Right cardiac atrium (tissue), 5 donors: ENCODE measurements at regions of chr6 and their contacts with region 1.

Region 1: DNA sequence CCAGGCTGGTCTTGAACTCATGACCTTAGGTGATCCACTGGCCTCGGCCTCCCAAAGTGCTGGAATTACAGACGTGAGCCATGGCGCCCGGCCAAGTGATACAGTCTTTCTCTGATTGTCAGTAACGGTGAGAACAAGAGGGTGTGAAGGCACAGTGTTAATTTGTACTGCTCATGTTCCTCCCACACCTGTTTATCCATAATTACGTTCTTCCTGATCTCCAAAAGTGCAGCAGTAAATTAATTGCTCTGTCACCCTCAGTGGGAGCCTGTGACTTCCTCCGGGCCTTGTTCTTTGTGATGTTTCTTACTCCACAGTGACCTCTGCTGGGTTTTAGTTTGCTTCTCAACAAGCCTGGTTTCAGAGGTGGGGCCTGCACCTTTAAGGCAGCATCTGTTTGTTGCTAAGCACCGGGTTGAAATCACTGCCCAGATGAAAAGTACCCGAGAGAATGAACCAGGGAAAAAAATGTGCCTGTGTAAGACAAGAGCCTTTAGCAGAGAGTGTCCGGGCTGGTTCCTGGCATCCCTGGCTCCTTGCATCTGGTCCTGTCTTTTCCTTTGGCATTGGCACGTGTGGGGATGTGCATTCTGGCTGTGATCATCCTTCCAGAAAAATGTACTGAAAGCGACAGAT is 89.1 kb upstream of the CLDN20 start:
- DNase-seq: peak; percentile 41 to 74 (median 58)
- ATAC-seq: peak; percentile 79 to 84
- H3K4me3 ChIP-seq: no peak overlapping the region
- H3K27ac ChIP-seq: no peak overlapping the region
- H3K4me1 ChIP-seq: peaks cover 5% of the 10 kb centered on the region
- H3K27me3 ChIP-seq: no peaks in the 10 kb centered on the region

Region 2: DNA sequence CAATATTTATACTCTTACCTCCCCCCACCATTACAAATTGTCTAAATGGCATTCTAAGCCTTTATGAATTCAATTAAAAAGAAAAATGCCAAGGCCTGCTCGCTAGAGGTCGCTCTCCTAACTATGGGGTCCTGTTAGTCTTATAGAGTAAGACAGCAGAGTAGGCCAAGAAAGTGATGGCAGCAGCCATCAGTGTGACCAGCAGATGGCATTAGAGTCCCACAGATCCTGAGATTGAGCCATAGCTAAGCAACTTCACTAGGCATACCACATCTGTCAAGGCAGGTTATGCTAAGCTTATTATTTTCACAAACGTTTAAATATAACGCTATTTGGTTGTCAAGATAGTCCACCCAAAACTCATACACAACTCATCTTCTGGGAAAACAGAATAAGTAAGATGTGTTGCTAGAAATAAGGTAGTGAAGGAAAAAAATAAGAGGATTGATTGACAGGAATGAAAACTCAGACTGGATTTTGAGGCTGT is 499.0 kb before region 1 on chr6:
- intact Hi-C with region 1: loop called in 3 of 4 experiments (anchors 5 to 10 kb)
- DNase-seq: peak; percentile 83 to 93 (median 87)
- ATAC-seq: peak; percentile 97 to 98
- H3K4me3 ChIP-seq: no peak overlapping the region
- H3K27ac ChIP-seq: no peak overlapping the region
- H3K4me1 ChIP-seq: no peaks in the 10 kb centered on the region
- H3K27me3 ChIP-seq: no peaks in the 10 kb centered on the region

Region 3: GRCh38 chr6:154868143-154868594 is 306.5 kb before region 1 on chr6:
- intact Hi-C with region 1: loop called in 3 of 4 experiments (anchors 5 to 10 kb)
- DNase-seq: no peak
- ATAC-seq: no peak
- H3K4me3 ChIP-seq: no peak overlapping the region
- H3K27ac ChIP-seq: no peak overlapping the region
- H3K4me1 ChIP-seq: no peaks in the 10 kb centered on the region
- H3K27me3 ChIP-seq: no peaks in the 10 kb centered on the region

Region 4: DNA sequence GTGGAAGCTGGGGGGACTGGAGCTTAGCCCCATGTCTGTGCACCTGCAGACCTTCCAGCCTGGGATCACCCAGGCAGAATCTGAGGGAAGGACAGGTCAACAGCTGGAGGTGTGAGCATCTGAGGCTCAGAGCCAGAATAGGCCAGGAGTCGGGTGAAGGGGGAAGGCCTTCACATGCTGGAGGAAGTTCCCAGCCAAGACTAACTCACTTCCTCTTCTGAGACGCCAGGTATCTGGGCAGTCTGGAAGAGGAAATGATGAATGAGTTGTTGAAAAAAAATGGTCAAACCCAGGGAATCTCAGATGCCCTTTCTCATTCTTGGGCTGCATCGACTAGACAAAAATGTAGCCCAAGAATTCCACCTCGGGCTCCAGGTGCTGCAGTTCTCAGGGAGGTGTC is 253.2 kb before region 1 on chr6:
- intact Hi-C with region 1: loop called in 2 of 4 experiments (anchors 5 kb)
- DNase-seq: no peak
- ATAC-seq: no peak
- H3K4me3 ChIP-seq: no peak overlapping the region
- H3K27ac ChIP-seq: no peak overlapping the region
- H3K4me1 ChIP-seq: peaks cover 5% of the 10 kb centered on the region
- H3K27me3 ChIP-seq: no peaks in the 10 kb centered on the region

Region 5: DNA sequence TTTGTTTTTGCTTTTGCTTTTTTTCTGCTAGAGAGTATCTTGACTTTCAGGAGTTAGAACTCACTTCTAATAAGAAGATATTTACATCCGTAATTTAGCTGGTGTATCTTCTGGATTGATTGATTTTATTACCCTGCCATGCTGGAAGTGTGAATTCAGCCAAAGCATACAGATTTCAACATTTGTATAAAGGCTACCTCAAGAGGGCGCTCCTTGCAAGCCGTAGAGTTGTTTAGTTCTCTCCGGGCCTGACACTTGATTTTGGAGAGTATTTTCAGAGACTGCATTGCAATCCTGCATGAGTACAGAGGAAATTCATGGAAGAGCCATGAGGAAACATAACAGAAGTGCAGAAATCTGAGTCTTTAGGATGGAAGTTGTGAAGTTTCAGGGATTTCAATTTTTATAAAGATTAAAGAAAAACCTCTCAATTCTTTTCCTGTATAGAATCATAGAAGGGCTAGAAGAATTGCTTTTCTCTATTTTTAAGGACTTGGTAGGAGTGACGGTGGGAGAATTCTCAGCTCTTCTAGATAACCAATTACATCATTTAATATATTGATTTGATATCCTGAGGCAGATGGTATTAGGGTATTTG is 246.3 kb before region 1 on chr6:
- intact Hi-C with region 1: loop called (anchors 2 to 5 kb)
- DNase-seq: peak in 2 of 3 donors; percentile 31 to 67
- ATAC-seq: peak; percentile 51 to 63
- H3K4me3 ChIP-seq: no peak overlapping the region
- H3K27ac ChIP-seq: no peak overlapping the region
- H3K4me1 ChIP-seq: peaks cover 3% of the 10 kb centered on the region
- H3K27me3 ChIP-seq: no peaks in the 10 kb centered on the region

Region 6: GRCh38 chr6:155248008-155249001 is 73.6 kb after region 1 on chr6:
- intact Hi-C with region 1: loop called in 3 of 4 experiments (anchors 5 kb)
- DNase-seq: peak in 2 of 3 donors; percentile 31 to 66
- ATAC-seq: peak; percentile 54
- H3K4me3 ChIP-seq: no peak overlapping the region
- H3K27ac ChIP-seq: no peak overlapping the region
- H3K4me1 ChIP-seq: no peaks in the 10 kb centered on the region
- H3K27me3 ChIP-seq: no peaks in the 10 kb centered on the region

Region 7: DNA sequence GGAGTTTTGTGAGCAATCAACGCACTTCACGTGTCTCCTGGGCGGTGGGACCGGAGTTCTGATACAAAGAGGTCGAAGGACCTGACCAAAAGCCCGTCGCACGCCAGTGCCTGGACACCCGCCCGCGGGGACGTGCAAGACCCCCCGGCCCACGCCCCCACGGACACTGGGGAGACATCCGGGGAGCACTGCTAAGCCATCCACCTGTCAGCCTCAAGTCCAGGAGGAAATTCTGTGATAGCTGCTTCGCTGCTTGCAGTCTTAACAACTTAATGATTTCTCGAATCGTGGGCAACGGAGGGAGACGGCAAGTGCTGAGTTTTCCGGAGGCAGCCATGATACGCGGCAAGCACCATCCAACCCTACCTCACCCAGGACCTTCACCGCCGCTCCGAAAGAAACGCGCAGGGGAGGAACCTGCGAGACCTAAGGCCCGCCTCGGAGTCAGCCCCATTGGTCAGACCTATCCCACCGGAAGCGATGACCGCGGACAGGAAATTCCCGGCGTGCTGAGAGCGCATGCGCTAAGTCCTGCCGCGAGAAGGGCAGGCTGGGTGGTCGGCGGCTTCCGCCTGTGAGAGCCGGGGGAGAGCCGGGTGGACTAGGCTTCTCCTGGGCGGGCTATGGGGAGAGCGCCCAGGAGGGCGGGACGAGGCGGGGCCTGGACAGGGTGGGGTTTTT is 139.5 kb after region 1 on chr6 and contains the start of gene TFB1M:
- intact Hi-C with region 1: loop called in 2 of 4 experiments (anchors 5 to 10 kb)
- DNase-seq: peak; percentile 99 to 100 (median 99)
- ATAC-seq: peak; percentile 99 to 100
- H3K4me3 ChIP-seq: peak within 1 kb of the TSS; percentile 51
- H3K27ac ChIP-seq: peak within 1 kb of the TSS; percentile 85
- H3K4me1 ChIP-seq: no peaks in the 10 kb centered on the region
- H3K27me3 ChIP-seq: no peaks in the 10 kb centered on the region
- total RNA-seq, gene TFB1M: 19.3 to 20.6 (median 20.2) TPM

Region 8: GRCh38 chr6:155604991-155605390 is 430.3 kb after region 1 on chr6:
- intact Hi-C with region 1: no loop called
- DNase-seq: no peak
- ATAC-seq: no peak
- H3K4me3 ChIP-seq: no peak overlapping the region
- H3K27ac ChIP-seq: no peak overlapping the region
- H3K4me1 ChIP-seq: no peaks in the 10 kb centered on the region
- H3K27me3 ChIP-seq: no peaks in the 10 kb centered on the region

Region 9: DNA sequence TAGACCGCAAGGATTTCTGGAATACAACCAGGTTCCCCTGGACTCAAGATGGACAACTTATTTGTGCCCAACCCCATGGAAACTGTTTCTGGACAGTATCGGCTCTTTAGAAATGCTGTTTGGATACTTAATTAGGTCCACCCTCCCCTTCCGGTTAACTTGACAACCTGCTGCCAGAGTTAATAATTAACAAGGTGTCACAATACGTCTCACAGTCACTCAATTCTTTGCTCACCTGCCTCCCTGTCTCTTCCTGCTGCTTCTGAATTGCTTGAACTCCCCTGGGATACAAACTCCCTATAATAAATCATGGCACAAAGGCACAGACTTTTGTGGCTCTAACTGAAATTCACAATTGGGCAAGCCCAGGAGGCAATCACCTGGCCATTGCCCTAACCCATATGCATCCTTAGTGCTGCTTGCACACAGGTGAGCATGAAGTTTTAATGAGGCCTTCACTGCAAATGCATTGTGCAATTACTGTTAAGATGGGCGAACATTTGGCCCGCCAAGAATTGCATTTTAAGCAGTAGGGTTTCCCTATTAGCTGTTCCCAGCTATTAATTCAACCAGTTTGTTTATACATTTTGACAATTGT is 785.3 kb after region 1 on chr6:
- intact Hi-C with region 1: no loop called
- DNase-seq: no peak
- ATAC-seq: no peak
- H3K4me3 ChIP-seq: no peak overlapping the region
- H3K27ac ChIP-seq: no peak overlapping the region
- H3K4me1 ChIP-seq: no peaks in the 10 kb centered on the region
- H3K27me3 ChIP-seq: no peaks in the 10 kb centered on the region